Posterior cingulate gyrus (tissue), 11 donors: ENCODE measurements at regions of chr7 and their contacts with region 1.

Region 1: DNA sequence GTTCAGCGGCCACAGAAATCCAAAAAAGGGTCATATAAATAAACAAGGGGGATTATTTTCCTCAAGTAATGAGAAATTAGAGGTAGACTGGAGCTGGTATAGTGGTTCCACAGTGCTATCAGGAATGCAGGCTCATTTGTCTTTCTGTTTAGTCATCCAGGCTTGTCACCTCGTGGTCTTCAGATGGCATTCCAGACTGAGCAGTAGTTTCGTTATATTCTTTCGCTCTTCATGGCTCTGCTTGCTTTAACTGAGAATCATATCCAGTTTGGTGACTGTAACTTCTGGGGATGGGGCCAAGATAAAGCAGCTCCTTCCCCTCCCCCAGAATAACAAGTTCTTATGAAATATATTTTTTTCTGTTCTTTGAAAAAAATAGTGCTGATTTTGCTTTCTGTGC is 9.5 kb downstream of the ANKIB1 start:
- DNase-seq: no peak

Region 2: DNA sequence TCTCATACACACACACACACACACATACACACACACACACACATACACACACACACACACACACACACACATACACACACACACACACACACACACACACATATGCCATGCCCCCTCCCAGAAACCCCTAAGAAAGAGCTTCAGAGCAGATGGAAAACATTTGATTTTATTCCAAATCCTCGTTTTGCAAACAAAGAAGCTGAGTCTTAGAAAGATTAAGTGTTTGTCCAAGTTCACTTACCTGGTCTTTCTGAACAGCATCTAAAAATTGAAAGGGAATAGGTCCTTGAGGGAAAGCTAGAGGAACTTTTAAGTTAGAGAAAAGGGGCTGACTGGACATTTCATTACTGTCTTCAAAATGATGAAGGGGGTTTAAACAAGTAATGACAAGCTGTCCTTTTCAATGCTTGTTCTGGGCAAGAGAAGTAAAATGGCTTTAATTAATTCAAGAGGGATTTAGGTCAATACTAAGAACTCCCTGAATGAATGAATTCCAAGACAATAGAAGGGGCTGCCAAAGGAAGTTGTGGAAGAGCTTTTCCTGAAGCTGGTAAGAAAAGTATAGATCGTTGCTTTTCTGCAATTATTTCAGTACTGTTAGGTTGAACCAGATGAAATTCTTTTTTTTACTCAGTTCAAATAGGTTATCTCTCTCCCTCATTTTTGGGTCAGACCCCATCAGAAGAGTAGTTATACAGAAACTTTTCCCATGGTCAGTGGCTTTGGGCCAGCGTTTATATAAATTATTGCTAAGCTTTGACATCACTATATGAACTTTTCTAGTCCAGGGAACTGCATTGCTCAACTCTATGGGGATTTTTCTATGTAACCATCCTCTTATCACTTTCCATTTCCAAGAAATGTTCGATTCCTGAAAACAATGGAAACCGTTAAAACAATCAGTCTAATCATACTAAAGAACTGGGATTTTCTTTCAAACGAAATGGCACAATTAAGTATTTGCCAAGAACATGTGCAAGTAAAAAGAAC is 636.2 kb before region 1 on chr7:
- intact Hi-C with region 1: no loop called
- DNase-seq: no peak

Region 3: GRCh38 chr7:91826377-91826776 is 428.9 kb before region 1 on chr7:
- intact Hi-C with region 1: no loop called
- DNase-seq: no peak

Region 4: GRCh38 chr7:92292981-92293380 is 37.7 kb after region 1 on chr7:
- intact Hi-C with region 1: loop called (anchors 5 kb)
- DNase-seq: no peak

Region 5: GRCh38 chr7:92336662-92337340 is 81.5 kb after region 1 on chr7:
- intact Hi-C with region 1: loop called (anchors 10 kb)
- DNase-seq: no peak